Ovary (tissue), 10 donors: ENCODE measurements at regions of chr6 and their contacts with region 1.

Region 1: GRCh38 chr6:107114213-107114905 is 956 bp downstream of the BEND3 start:
- DNase-seq: peak; percentile 83 to 93 (median 90)
- H3K4me3 ChIP-seq: peak overlapping the region; percentile 62
- H3K27ac ChIP-seq: peak overlapping the region; percentile 72 to 73
- H3K4me1 ChIP-seq: no peaks in the 10 kb centered on the region
- H3K27me3 ChIP-seq: no peaks in the 10 kb centered on the region
- CTCF ChIP-seq: peak; percentile 85 to 91 (median 90)
- EP300 ChIP-seq: no peak
- POLR2A ChIP-seq: no peak

Region 2: DNA sequence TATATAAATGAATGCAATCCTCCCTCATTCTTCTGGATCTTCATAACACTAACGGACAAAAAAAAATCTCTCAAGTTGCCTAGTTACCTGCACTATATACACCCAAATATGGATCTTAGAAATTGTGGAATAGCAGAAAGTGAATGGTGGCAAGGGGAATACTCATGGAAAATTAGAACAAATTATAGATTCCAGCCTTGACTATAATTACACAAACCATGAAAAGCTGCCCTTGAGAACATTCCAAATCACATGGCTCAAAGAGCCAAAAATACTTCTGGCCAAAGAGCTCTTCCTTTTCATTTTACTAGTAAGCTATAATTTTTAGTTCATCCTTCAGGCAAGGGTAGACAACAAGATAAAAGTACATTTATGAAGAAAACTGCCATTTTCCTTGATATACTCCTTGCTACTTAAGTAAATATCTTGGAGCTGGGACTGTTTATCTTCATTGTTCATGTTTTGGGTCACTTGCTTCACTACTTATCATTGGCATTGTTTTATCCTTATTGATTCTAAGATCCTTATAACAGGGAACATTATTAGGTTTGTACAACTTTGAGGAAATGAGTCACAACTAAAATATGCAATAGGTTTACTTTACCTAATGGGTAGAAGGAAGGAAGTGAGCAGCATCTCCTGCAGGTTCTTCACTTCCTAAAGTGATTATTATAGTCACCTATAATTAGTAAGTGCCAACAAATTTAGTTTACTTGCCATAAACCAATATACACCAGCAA is 92.7 kb before region 1 on chr6:
- intact Hi-C with region 1: loop called in 1 of 4 experiments (anchors 10 kb)
- DNase-seq: no peak
- H3K4me3 ChIP-seq: no peak overlapping the region
- H3K27ac ChIP-seq: no peak overlapping the region
- H3K4me1 ChIP-seq: peaks cover 2% of the 10 kb centered on the region
- H3K27me3 ChIP-seq: no peaks in the 10 kb centered on the region
- CTCF ChIP-seq: no peak
- EP300 ChIP-seq: no peak
- POLR2A ChIP-seq: no peak

Region 3: GRCh38 chr6:107056796-107057195 is 57.6 kb before region 1 on chr6:
- intact Hi-C with region 1: no loop called
- DNase-seq: no peak
- H3K4me3 ChIP-seq: no peak overlapping the region
- H3K27ac ChIP-seq: no peak overlapping the region
- H3K4me1 ChIP-seq: no peaks in the 10 kb centered on the region
- H3K27me3 ChIP-seq: no peaks in the 10 kb centered on the region
- CTCF ChIP-seq: no peak
- EP300 ChIP-seq: no peak
- POLR2A ChIP-seq: no peak

Region 4: GRCh38 chr6:107235511-107235910 is 121.2 kb after region 1 on chr6:
- intact Hi-C with region 1: no loop called
- DNase-seq: no peak
- H3K4me3 ChIP-seq: no peak overlapping the region
- H3K27ac ChIP-seq: no peak overlapping the region
- H3K4me1 ChIP-seq: peaks cover 2% of the 10 kb centered on the region
- H3K27me3 ChIP-seq: no peaks in the 10 kb centered on the region
- CTCF ChIP-seq: no peak
- EP300 ChIP-seq: no peak
- POLR2A ChIP-seq: no peak